Activated naive CD4-positive, alpha-beta T cell treated with anti-CD3 and anti-CD28 coated beads for 36 hours (primary cell): ENCODE measurements at regions of chr13 and their contacts with region 1.

Region 1: DNA sequence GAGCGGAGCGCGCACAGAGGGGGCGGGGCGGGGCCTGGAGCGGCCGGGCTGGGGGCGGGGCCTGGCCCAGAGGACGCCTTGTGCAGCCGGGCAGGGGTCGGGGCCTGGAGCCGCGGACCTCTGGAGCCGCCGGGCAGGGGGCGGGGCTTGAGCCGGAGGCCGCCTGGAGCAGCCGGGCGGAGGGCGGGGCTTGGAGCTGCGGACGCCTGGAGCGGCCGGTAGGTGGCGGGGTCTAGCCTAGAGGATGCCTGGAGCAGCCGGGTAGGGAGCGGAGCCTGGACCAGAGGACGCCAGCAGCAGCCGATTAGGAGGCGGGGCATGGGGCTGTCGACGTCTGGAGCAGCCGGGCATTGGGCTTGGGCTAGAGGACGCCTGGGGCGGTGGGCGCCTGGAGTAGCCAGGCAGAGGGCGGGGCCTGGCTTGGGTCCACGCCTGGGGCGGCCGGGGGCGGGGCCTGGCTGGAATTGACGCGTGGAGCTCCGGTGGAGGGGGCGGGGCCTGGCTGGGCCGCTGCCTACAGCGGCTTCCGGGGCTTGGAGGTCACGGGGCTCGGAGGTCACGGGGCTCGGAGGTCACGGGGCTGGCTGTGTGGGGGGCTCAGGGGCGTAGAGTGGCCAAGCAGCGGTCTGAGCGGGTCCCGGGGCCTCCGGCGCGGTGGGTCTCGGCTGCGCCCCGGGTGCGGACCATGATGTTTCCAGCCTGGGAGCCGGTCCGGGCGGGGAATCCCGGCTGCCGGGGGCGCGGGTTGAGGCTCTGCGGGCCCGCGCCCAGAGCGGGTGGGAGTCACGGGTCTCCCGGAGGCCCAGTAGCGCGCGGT is at the start of gene ANKRD10:
- DNase-seq: peak; percentile 97
- H3K4me3 Mint-ChIP-seq: peak within 1 kb of the TSS; percentile 85
- H3K27ac Mint-ChIP-seq: peak within 1 kb of the TSS; percentile 93
- H3K4me1 Mint-ChIP-seq: peaks cover 43% of the 10 kb centered on the region
- H3K27me3 Mint-ChIP-seq: no peaks in the 10 kb centered on the region
- total RNA-seq, gene ANKRD10: 79.8 to 82.5 TPM

Region 2: DNA sequence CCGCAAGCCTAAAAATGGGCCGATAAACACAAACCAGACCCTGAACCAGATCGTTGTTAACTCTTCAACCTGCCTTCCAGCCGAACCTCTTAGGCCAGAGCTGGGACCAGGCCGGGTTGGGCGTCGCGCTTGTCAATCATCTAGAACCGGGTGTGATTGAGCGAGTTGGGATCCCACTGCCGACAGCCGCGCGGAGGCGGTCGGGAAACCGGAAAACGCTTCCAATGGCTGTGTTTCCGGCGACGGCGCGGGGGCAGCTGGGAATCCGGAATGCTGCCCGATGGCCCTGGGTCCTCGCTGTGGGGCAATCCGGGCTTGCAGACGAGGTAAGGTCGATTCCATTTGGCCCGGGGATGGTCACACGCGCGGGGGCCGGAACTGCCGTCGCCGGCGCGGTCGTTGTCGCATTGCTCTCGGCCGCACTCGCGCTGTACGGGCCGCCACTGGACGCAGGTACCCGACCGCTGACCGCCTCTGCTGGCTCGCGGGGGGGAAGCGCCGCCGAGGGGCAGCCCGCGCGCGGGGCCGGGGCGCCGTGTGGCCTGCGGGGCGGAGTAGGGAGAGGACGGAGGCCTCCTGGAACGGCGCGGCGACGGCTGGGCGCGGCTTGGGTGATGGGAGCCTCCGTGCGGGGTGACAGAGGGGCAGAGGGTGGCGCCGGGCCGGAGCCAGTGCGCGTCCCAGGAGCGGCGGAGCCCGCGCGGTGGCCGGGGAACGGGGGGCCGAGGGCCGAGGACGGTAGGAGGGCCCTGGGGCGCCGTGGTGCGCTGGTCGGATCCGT is 299.8 kb before region 1 on chr13 and contains the start of gene NAXD:
- CTCF ChIA-PET with region 1: no interaction called
- intact Hi-C with region 1: loop called (anchors 1 kb)
- DNase-seq: peak; percentile 94
- H3K4me3 Mint-ChIP-seq: peak within 1 kb of the TSS; percentile 89
- H3K27ac Mint-ChIP-seq: peak within 1 kb of the TSS; percentile 89
- H3K4me1 Mint-ChIP-seq: peaks cover 40% of the 10 kb centered on the region
- H3K27me3 Mint-ChIP-seq: no peaks in the 10 kb centered on the region
- total RNA-seq, gene NAXD: 20.8 to 23.3 TPM

Region 3: GRCh38 chr13:110944121-110944967 is 29.1 kb after region 1 on chr13:
- CTCF ChIA-PET with region 1: interaction called, 4 read pairs
- intact Hi-C with region 1: loop called (anchors 1 kb)
- DNase-seq: peak; percentile 53
- H3K4me3 Mint-ChIP-seq: no peak overlapping the region
- H3K27ac Mint-ChIP-seq: no peak overlapping the region
- H3K4me1 Mint-ChIP-seq: peaks cover 21% of the 10 kb centered on the region
- H3K27me3 Mint-ChIP-seq: no peaks in the 10 kb centered on the region

Region 4: GRCh38 chr13:111006506-111007031 is 91.3 kb after region 1 on chr13:
- CTCF ChIA-PET with region 1: no interaction called
- intact Hi-C with region 1: loop called (anchors 1 kb)
- DNase-seq: no peak
- H3K4me3 Mint-ChIP-seq: no peak overlapping the region
- H3K27ac Mint-ChIP-seq: no peak overlapping the region
- H3K4me1 Mint-ChIP-seq: no peaks in the 10 kb centered on the region
- H3K27me3 Mint-ChIP-seq: peaks cover 7% of the 10 kb centered on the region

Region 5: DNA sequence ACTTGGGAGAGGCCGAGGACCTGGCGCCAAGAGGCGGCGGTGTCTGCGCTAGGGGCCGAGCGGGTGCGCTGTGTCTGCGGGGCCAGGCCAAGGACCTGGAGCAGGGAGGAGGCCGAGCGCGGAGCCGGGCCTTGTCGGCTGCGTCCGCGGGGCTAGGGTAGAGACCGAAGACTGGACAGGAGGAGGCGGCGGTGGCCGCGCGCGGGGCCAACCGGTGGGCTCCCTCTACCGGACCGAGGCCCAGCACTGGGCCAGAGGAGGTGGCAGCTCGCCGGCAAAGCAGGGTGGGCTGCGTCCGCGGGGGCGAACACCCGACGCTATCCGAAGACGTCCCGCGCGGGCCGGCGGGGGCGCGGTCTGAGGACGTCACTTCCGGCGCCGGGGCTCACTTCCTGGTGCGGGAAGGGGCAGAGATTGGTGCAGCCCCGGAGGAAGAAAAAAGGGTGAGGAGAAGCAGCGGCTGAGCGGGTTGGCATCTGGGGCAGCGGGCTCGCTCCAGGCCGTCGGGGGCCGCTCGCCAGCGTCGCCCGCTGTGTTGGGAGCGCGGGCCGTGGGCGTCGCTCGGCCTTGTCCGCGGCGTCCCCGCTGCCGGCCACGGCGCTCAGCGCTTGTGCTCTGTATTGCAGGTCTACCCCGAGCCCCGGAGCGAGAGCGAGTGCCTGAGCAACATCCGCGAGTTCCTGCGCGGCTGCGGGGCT is 238.2 kb after region 1 on chr13:
- CTCF ChIA-PET with region 1: no interaction called
- intact Hi-C with region 1: loop called (anchors 1 kb)
- DNase-seq: peak; percentile 93
- H3K4me3 Mint-ChIP-seq: peak overlapping the region; percentile 90
- H3K27ac Mint-ChIP-seq: peak overlapping the region; percentile 90
- H3K4me1 Mint-ChIP-seq: peaks cover 31% of the 10 kb centered on the region
- H3K27me3 Mint-ChIP-seq: no peaks in the 10 kb centered on the region

Region 6: GRCh38 chr13:111216166-111216960 is 301.1 kb after region 1 on chr13:
- CTCF ChIA-PET with region 1: no interaction called
- intact Hi-C with region 1: loop called (anchors 1 kb)
- DNase-seq: peak; percentile 62
- H3K4me3 Mint-ChIP-seq: no peak overlapping the region
- H3K27ac Mint-ChIP-seq: no peak overlapping the region
- H3K4me1 Mint-ChIP-seq: peaks cover 27% of the 10 kb centered on the region
- H3K27me3 Mint-ChIP-seq: no peaks in the 10 kb centered on the region

Region 7: DNA sequence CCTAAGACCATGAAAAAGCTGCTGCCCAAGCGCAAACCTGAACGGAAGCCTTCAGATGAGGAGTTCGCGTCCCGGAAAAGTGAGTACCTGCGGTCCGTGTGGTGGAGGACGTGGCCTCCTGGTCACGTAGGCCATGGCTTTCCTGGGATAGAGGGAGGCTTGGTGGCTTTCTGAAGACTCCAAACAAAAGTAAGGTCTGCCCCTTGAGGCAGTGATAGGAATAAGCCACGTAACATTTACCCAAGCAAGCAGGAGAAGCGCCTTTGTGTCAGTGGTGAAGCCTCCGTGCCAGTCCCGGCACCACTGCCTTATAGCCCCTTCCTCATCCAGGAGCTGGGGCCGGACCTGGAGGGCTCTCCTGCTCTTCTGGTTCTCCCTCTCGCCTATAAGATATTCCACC is 370.9 kb after region 1 on chr13:
- CTCF ChIA-PET with region 1: no interaction called
- intact Hi-C with region 1: no loop called
- DNase-seq: no peak
- H3K4me3 Mint-ChIP-seq: no peak overlapping the region
- H3K27ac Mint-ChIP-seq: no peak overlapping the region
- H3K4me1 Mint-ChIP-seq: no peaks in the 10 kb centered on the region
- H3K27me3 Mint-ChIP-seq: no peaks in the 10 kb centered on the region